Naive thymus-derived CD4-positive, alpha-beta T cell (primary cell): ENCODE measurements at regions of chr11 and their contacts with region 1.

Region 1: DNA sequence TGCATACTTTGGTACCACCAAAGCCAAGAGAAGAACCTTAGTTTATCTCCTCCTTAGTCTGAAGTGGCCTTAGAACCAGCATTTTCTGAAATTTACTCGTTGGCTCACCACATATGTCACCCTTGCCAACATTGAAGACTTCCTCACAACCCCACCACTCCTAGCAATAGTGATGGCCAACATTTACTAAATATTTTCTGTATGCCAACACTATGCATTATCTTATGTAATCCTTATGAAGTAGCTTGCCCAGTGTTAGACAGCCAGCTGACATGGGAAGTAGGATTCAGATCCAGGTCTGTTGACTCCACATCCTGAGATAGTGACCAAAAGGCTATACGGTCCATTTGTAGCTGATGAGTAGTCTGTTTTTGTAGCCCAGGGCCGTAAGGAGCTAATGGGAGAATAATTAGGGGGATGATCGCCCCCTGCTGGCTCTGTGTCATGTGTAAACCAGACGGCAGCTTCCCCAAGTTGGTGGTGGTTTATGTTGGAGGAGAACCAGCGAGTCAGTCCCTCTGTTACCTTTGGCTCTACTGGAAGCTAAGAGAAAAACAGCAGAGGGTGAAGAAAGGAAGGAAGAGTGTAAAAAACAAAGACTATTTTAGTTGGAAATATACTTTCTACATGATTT is 120.5 kb upstream of the RASSF10 start:
- DNase-seq: peak; percentile 28 to 60 (median 52)
- ATAC-seq: peak; percentile 63
- H3K4me3 ChIP-seq: no peak overlapping the region
- H3K4me3 Mint-ChIP-seq: no peak overlapping the region
- H3K27ac ChIP-seq: no peak overlapping the region
- H3K27ac Mint-ChIP-seq: no peak overlapping the region
- H3K4me1 ChIP-seq: no peaks in the 10 kb centered on the region
- H3K4me1 Mint-ChIP-seq: peaks cover 0 to 4% (median 0%) of the 10 kb centered on the region in 7 donors
- H3K27me3 ChIP-seq: no peaks in the 10 kb centered on the region
- H3K27me3 Mint-ChIP-seq: peaks cover 8 to 15% (median 13%) of the 10 kb centered on the region in 5 donors

Region 2: DNA sequence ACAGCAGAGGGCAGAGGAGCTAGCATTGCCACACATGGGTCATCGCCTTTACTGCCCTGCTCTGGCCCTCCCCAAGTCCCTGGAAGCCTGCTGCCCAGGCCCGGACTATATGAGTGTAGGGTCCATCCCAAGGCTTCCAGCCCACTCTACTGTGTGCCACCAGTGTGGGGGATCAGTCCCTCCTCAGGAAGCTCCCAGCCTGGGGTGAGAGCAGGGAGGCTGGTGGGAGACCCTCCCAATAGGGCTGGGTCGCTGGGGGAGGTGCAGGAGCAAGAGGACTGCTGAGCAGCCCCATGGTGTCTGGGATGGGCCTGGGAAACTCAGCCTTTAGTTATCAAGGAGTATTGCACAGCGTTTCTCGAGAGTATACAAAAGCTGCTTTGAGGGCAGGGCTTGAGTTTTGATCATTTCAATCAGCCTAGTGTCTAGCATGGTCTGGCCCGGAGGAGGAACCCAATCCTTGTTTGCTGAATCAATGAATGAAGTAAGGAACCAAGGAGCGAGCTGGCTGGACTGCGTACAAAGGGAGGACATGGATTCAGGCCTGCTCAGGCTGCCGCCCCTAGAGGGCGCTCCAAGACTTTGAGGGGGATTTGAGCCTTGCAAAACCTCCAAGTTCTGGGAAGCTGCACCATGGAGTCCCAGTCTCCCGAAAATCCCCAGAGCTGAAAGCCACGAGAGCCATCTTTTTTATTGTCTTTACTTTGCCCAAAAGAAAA is 600.3 kb before region 1 on chr11:
- CTCF ChIA-PET with region 1: interaction called, 18 read pairs
- POLR2A ChIA-PET with region 1: interaction called, 4 read pairs
- intact Hi-C with region 1: loop called in 1 of 2 experiments (anchors 1 kb)
- DNase-seq: peak in 6 of 9 donors; percentile 13 to 59 (median 30)
- ATAC-seq: peak; percentile 50
- H3K4me3 ChIP-seq: no peak overlapping the region
- H3K4me3 Mint-ChIP-seq: no peak overlapping the region
- H3K27ac ChIP-seq: no peak overlapping the region
- H3K27ac Mint-ChIP-seq: no peak overlapping the region
- H3K4me1 ChIP-seq: peaks cover 5 to 6% of the 10 kb centered on the region in 2 donors
- H3K4me1 Mint-ChIP-seq: peaks cover 5 to 19% (median 14%) of the 10 kb centered on the region in 7 donors
- H3K27me3 ChIP-seq: no peaks in the 10 kb centered on the region
- H3K27me3 Mint-ChIP-seq: no peaks in the 10 kb centered on the region

Region 3: GRCh38 chr11:12411806-12412727 is 476.6 kb before region 1 on chr11:
- CTCF ChIA-PET with region 1: interaction called, 3 read pairs
- POLR2A ChIA-PET with region 1: no interaction called
- intact Hi-C with region 1: loop called (anchors 1 to 5 kb)
- DNase-seq: peak in 5 of 9 donors; percentile 8 to 27 (median 22)
- ATAC-seq: no peak
- H3K4me3 ChIP-seq: no peak overlapping the region
- H3K4me3 Mint-ChIP-seq: no peak overlapping the region
- H3K27ac ChIP-seq: no peak overlapping the region
- H3K27ac Mint-ChIP-seq: no peak overlapping the region
- H3K4me1 ChIP-seq: no peaks in the 10 kb centered on the region
- H3K4me1 Mint-ChIP-seq: no peaks in the 10 kb centered on the region
- H3K27me3 ChIP-seq: no peaks in the 10 kb centered on the region
- H3K27me3 Mint-ChIP-seq: peaks cover 0 to 19% (median 15%) of the 10 kb centered on the region in 5 donors

Region 4: GRCh38 chr11:12599408-12600143 is 289.1 kb before region 1 on chr11:
- CTCF ChIA-PET with region 1: interaction called, 3 read pairs
- POLR2A ChIA-PET with region 1: no interaction called
- intact Hi-C with region 1: loop called (anchors 1 to 5 kb)
- DNase-seq: peak in 5 of 9 donors; percentile 8 to 57 (median 13)
- ATAC-seq: peak; percentile 26
- H3K4me3 ChIP-seq: no peak overlapping the region
- H3K4me3 Mint-ChIP-seq: no peak overlapping the region
- H3K27ac ChIP-seq: no peak overlapping the region
- H3K27ac Mint-ChIP-seq: peak overlapping the region in 1 of 9 donors; percentile 25
- H3K4me1 ChIP-seq: peaks cover 0 to 17% of the 10 kb centered on the region in 2 donors
- H3K4me1 Mint-ChIP-seq: peaks cover 3 to 25% (median 18%) of the 10 kb centered on the region in 7 donors
- H3K27me3 ChIP-seq: no peaks in the 10 kb centered on the region
- H3K27me3 Mint-ChIP-seq: peaks cover 16 to 45% (median 28%) of the 10 kb centered on the region in 5 donors

Region 5: DNA sequence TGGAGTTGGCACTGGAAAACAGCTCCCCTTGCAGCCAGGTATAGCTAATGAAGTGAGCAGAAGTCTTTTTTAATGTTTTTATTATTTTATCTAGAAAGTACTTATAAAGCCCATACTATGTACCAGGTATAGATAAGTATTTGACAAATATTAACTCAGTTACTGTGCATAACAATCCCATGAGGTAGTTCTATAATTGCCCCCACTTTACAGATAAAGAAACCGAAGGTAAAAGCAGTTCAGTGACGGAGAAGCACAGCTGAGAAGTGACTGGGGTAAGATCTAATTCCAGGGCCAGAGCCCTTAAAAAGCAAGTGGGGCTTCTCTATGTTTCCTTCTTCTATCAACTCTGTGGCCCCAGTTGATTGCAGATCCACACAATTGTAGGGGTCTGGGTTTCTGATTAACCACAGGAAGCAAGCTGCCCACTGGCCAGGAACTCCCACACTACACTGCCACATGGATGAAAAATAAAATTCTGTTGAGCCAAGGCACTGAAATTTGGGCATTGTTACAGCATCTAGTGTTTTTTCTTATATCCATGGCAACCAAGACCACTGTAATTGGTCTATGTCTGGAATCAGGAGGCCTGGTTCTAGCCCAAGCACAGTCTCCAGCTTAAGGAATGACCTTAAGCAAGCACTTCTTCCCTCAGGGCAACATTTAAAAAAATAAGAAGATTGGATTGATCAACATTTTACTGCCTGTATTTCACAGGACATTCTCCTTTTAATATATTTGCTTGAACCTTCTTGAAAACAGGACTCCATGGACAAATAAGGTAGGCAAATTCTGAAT is 269.7 kb before region 1 on chr11:
- CTCF ChIA-PET with region 1: no interaction called
- POLR2A ChIA-PET with region 1: no interaction called
- intact Hi-C with region 1: no loop called
- DNase-seq: no peak
- ATAC-seq: no peak
- H3K4me3 ChIP-seq: no peak overlapping the region
- H3K4me3 Mint-ChIP-seq: no peak overlapping the region
- H3K27ac ChIP-seq: no peak overlapping the region
- H3K27ac Mint-ChIP-seq: no peak overlapping the region
- H3K4me1 ChIP-seq: no peaks in the 10 kb centered on the region
- H3K4me1 Mint-ChIP-seq: peaks cover 0 to 4% (median 0%) of the 10 kb centered on the region in 7 donors
- H3K27me3 ChIP-seq: no peaks in the 10 kb centered on the region
- H3K27me3 Mint-ChIP-seq: peaks cover 0 to 17% (median 16%) of the 10 kb centered on the region in 5 donors